ENCODE measurements at regions of chr17 and their contacts with region 1.

Region 1: DNA sequence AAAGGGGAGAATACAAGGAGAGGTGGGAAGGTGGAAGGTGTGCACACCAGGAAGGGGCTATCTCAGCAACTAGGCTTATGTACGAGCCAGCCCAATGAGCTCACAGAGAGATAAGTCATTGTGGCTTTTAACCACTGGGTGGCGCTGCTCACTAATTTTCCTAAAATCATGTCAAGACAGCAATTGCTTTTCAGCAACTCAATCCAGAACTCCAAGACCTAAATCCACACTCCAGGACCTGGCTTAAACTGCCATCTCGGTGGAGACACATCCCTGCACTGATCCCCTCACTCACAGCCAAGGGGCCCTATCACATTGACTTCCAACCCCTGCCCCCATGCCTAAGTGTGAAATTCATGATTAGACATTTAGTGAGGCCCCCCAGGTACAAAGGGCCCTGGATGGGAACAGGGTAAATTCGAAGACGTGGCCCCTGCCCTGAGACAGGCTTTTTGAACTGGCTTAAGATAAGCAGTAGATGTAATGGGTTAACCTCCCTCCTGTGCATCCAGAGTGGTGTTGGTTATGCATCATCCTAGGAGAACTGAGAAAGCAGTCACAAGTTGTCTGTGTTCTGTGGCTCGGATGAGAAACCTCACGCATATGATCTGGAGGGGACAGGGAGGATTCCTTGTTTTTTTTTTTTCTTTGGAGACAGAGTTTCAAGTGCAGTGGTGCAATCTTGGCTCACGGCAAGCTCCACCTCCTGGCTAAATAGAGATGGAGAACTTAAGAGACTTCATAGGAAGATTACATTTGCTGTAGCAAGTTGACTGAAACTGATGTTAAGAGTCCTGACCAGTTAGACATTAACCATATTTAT is 11.5 kb downstream of the CCL16 start:
- DNase-seq: peak; percentile 69 to 84
- ATAC-seq: peak; percentile 83 to 93
- H3K4me3 ChIP-seq: no peak overlapping the region
- H3K27ac ChIP-seq: no peak overlapping the region
- H3K4me1 ChIP-seq: peaks cover 9% of the 10 kb centered on the region; the same call in 1 of the 3 replicates
- CTCF ChIP-seq: peak; percentile 93
- EP300 ChIP-seq: no peak
- POLR2A ChIP-seq: no peak
- RAD21 ChIP-seq: peak; percentile 96

Region 2: DNA sequence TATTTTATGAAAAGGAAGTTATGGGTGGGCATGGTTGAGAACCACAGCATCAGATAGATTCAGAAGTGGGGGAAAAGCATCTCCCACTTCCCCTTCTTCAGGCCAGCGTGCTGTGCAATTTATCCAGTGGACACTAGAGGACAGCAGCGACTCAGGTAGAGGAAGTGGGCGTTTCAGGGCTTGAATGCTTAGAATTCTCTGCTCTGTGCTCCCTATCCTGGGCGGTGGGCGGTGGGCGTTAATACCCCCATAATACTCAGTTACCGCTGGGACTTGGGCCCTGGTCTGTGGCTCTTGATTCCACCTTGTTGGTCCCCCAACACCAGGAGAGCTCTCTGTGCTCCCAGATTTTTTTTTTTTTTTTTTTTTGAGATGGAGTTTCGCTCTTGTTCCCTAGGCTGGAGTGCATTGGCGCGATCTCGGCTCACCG is 22.6 kb before region 1 on chr17:
- CTCF ChIA-PET with region 1: interaction called, 18 read pairs
- POLR2A ChIA-PET with region 1: no interaction called
- DNase-seq: peak; percentile 57 to 75
- ATAC-seq: peak; percentile 91 to 95
- H3K4me3 ChIP-seq: peak overlapping the region; percentile 42
- H3K27ac ChIP-seq: peak overlapping the region; percentile 49 to 73; a peak in 5 of 6 replicates
- H3K4me1 ChIP-seq: 0 out of 3 replicates have a peak, but pooled peaks cover 4% of the 10 kb centered on the region
- CTCF ChIP-seq: peak; percentile 90
- EP300 ChIP-seq: no peak
- POLR2A ChIP-seq: no peak
- RAD21 ChIP-seq: peak; percentile 84 to 85

Region 3: GRCh38 chr17:35953720-35954119 is 16.0 kb before region 1 on chr17:
- CTCF ChIA-PET with region 1: interaction called, 36 read pairs
- POLR2A ChIA-PET with region 1: no interaction called
- DNase-seq: no peak
- ATAC-seq: no peak
- H3K4me3 ChIP-seq: no peak overlapping the region
- H3K27ac ChIP-seq: no peak overlapping the region
- H3K4me1 ChIP-seq: no peaks in the 10 kb centered on the region
- CTCF ChIP-seq: no peak
- EP300 ChIP-seq: no peak
- POLR2A ChIP-seq: no peak
- RAD21 ChIP-seq: no peak

Region 4: GRCh38 chr17:35981908-35982330 is 12.2 kb after region 1 on chr17:
- CTCF ChIA-PET with region 1: interaction called, 41 read pairs
- POLR2A ChIA-PET with region 1: no interaction called
- DNase-seq: no peak
- ATAC-seq: peak in 1 of 2 experiments; percentile 54; a peak in 2 of 6 replicates
- H3K4me3 ChIP-seq: no peak overlapping the region
- H3K27ac ChIP-seq: no peak overlapping the region
- H3K4me1 ChIP-seq: no peaks in the 10 kb centered on the region
- CTCF ChIP-seq: no peak
- EP300 ChIP-seq: no peak
- POLR2A ChIP-seq: no peak
- RAD21 ChIP-seq: peak in 1 of 2 experiments; percentile 29; a peak in 2 of 5 replicates

Region 5: GRCh38 chr17:36072431-36073121 is 102.8 kb after region 1 on chr17:
- CTCF ChIA-PET with region 1: interaction called, 12 read pairs
- POLR2A ChIA-PET with region 1: no interaction called
- DNase-seq: peak; percentile 52 to 70
- ATAC-seq: peak; percentile 73 to 93
- H3K4me3 ChIP-seq: no peak overlapping the region
- H3K27ac ChIP-seq: no peak overlapping the region
- H3K4me1 ChIP-seq: no peaks in the 10 kb centered on the region
- CTCF ChIP-seq: peak; percentile 70
- EP300 ChIP-seq: no peak
- POLR2A ChIP-seq: no peak
- RAD21 ChIP-seq: peak; percentile 34 to 51; a peak in 2 of 5 replicates

Region 6: GRCh38 chr17:36117505-36118382 is 148.0 kb after region 1 on chr17:
- CTCF ChIA-PET with region 1: interaction called, 11 read pairs
- POLR2A ChIA-PET with region 1: no interaction called
- DNase-seq: no peak
- ATAC-seq: no peak
- H3K4me3 ChIP-seq: no peak overlapping the region
- H3K27ac ChIP-seq: no peak overlapping the region
- H3K4me1 ChIP-seq: no peaks in the 10 kb centered on the region
- CTCF ChIP-seq: no peak
- EP300 ChIP-seq: no peak
- POLR2A ChIP-seq: no peak
- RAD21 ChIP-seq: no peak

Measured in A549 (cell line).